Activated T-helper 1 cell treated with anti-CD3 and anti-CD28 coated beads, Interleukin-12 subunit alpha, Interleukin-12 subunit beta, Interleukin-2, Interleukin-4 antibody, amounts not matched to agents 30 ng/mL and 10 ng/mL and 1 ng/mL, durations not matched to agents 14 hours and 24 hours and 36 hours (primary cell): ENCODE measurements at regions of chr1 and their contacts with region 1.

Region 1: DNA sequence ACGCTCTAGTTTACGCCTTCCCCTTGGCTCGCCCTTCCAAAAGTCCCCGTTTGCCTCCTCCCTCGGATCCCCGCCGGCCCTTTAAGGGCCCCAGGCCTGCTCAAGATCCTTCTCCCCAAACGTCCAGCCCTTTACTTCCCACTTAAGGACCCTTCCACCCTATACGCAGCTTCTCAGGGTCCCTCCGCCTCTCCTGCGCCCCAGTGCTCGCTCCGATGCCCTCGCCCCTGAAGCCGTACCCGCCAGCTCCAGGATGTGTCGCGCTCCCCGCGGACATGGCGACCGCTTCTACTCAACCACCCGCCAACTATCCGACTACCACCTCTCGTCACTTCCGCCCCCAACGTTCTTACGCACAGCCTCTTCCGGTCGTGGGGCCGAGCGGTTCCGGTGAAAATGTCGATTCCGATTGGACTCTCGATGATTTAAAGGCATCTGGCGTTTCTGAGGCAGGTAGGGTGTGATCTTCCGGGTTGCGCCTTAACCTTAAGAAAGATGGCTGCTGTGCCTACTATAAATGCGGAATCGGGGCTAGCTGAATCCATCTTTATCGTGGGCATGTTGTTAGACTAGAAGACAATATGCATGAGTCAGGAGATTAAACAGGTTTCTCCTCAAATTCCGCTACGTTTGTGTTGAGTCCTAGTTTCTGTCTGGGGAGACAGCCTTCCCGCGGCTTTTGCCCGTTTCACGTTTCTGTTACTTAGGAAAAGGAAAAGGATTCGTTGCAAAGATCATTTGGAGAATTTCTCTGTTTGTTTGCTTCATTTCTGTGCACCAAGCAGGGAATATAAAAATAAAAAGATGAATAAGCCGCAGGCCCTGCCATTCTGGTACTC is at the start of gene KHDC4:
- DNase-seq: peak; percentile 94
- H3K4me3 Mint-ChIP-seq: no peak within 1 kb of the TSS
- H3K27ac Mint-ChIP-seq: peak within 1 kb of the TSS; percentile 61
- H3K4me1 Mint-ChIP-seq: peaks cover 39% of the 10 kb centered on the region
- H3K27me3 Mint-ChIP-seq: no peaks in the 10 kb centered on the region
- total RNA-seq, gene KHDC4: 80.1 and 81.8 TPM in 2 replicates

Region 2: GRCh38 chr1:155688324-155689080 is 245.8 kb before region 1 on chr1 and contains the start of gene YY1AP1:
- intact Hi-C with region 1: loop called (anchors 5 kb)
- DNase-seq: peak; percentile 88
- H3K4me3 Mint-ChIP-seq: peak within 1 kb of the TSS; percentile 95
- H3K27ac Mint-ChIP-seq: peak within 1 kb of the TSS; percentile 96
- H3K4me1 Mint-ChIP-seq: peaks cover 62% of the 10 kb centered on the region
- H3K27me3 Mint-ChIP-seq: peaks cover 3% of the 10 kb centered on the region
- total RNA-seq, gene YY1AP1: 62.2 and 64.4 TPM in 2 replicates

Region 3: DNA sequence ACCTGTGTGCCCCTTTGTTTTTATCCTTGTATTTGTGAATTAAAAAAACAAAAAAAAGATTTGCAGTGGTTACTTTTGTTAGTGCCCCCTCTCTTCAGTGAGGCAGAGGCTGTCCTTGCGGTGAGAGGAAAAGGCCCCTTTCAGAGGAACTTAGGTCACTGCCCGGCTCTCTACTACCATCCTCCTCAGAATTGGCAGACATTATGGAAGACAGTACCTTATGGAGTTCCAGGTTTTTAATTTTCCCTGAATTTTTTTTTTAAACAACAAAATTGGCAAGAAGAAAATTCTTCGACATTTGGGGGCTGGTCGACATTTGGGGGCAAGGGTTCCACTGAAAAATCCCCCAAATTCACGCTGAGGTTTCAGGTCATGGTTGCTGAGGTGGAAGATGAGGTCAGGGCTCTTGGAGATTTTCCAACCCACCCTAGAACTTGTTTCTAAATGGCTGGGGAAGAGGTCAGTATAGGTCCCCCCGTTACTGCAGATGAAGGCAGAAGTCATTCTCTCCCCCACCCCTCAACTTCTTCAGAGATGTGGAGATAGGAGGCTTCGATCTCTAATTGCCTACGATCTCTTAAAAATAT is 12.4 kb after region 1 on chr1:
- intact Hi-C with region 1: loop called (anchors 1 kb)
- DNase-seq: no peak
- H3K4me3 Mint-ChIP-seq: peak overlapping the region; percentile 59
- H3K27ac Mint-ChIP-seq: peak overlapping the region; percentile 86
- H3K4me1 Mint-ChIP-seq: peaks cover 40% of the 10 kb centered on the region
- H3K27me3 Mint-ChIP-seq: no peaks in the 10 kb centered on the region

Region 4: GRCh38 chr1:155989242-155990004 is 55.1 kb after region 1 on chr1:
- intact Hi-C with region 1: loop called (anchors 1 kb)
- DNase-seq: peak; percentile 77
- H3K4me3 Mint-ChIP-seq: no peak overlapping the region
- H3K27ac Mint-ChIP-seq: no peak overlapping the region
- H3K4me1 Mint-ChIP-seq: peaks cover 18% of the 10 kb centered on the region
- H3K27me3 Mint-ChIP-seq: no peaks in the 10 kb centered on the region

Region 5: DNA sequence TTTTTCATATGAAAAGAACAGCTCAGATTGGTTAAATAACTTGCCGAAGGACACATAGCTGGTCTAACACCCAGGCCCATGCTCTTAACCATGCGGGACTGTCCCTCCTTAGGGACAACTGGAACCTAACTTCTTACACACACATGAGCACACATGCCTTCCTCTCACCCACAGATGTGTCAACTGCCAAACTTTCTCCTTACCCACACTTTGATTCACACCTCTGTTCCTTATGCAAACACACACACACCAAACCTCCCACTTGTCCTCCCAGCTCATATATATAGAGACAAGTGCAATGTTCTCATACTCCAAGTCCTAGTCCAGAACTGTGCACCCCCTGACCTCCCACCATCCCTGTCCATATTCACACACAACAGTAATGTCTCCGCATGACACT is 130.9 kb after region 1 on chr1:
- intact Hi-C with region 1: loop called (anchors 1 kb)
- DNase-seq: no peak
- H3K4me3 Mint-ChIP-seq: no peak overlapping the region
- H3K27ac Mint-ChIP-seq: peak overlapping the region; percentile 5
- H3K4me1 Mint-ChIP-seq: peaks cover 16% of the 10 kb centered on the region
- H3K27me3 Mint-ChIP-seq: peaks cover 4% of the 10 kb centered on the region